Activated CD8-positive, alpha-beta T cell treated with anti-CD3 and anti-CD28 coated beads for 36 hours (primary cell): ENCODE measurements at regions of chr3 and their contacts with region 1.

Region 1: DNA sequence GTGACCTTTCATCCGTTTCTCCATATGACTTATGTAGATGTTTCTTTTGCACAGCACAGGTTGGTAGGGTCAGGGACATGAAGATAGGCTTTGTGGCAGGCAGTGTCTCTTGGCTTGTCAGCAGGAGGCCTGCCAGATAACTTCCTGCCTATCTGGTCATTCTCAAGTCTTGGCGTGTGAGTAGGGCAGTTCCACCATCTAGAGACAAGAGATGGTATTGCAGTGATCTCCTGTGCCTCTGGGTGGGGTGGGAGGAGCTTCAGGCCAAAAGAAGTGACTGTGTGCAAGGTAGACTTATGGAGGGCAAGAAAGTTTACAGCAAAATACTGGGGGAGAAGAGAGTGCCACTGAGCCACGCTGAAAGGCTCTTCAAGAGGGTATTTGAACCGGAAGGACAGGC is 11.0 kb downstream of the TEX264 start:
- DNase-seq: peak; percentile 87
- ATAC-seq: peak; percentile 90
- H3K4me3 Mint-ChIP-seq: no peak overlapping the region
- H3K27ac Mint-ChIP-seq: peak overlapping the region; percentile 68
- H3K4me1 Mint-ChIP-seq: peaks cover 89% of the 10 kb centered on the region
- H3K27me3 Mint-ChIP-seq: no peaks in the 10 kb centered on the region
- CTCF ChIP-seq: peak; percentile 92

Region 2: DNA sequence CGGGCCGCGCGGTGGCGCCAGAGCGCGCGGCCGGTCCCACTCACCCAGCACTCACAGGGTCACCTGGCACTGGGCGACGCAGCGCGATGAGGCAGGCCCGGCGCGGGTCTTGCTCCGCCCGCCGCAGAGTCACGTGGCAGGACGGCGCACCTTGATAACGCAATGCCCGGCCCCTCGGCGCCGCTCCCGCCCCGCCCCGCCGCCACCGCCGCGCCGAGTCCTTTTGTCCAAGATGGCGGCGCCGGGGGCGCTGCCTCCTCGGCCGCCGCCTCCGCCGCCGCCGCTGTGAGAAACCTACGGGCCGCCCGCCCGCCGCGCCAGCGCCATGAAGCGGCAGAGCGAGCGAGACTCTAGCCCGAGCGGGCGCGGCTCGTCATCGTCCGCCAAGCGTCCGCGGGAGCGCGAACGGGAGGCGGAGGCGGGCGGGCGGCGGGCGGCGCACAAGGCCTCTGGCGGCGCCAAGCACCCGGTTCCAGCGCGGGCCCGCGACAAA is 291.0 kb before region 1 on chr3 and contains the start of gene RBM15B:
- CTCF ChIA-PET with region 1: interaction called, 11 read pairs
- POLR2A ChIA-PET with region 1: interaction called, 3 read pairs
- intact Hi-C with region 1: loop called (anchors 10 kb)
- DNase-seq: peak; percentile 98
- ATAC-seq: peak; percentile 96
- H3K4me3 Mint-ChIP-seq: peak within 1 kb of the TSS; percentile 83
- H3K27ac Mint-ChIP-seq: peak within 1 kb of the TSS; percentile 91
- H3K4me1 Mint-ChIP-seq: peaks cover 68% of the 10 kb centered on the region
- H3K27me3 Mint-ChIP-seq: no peaks in the 10 kb centered on the region
- CTCF ChIP-seq: peak; percentile 78
- total RNA-seq, gene RBM15B: 20.8 to 20.9 TPM

Region 3: DNA sequence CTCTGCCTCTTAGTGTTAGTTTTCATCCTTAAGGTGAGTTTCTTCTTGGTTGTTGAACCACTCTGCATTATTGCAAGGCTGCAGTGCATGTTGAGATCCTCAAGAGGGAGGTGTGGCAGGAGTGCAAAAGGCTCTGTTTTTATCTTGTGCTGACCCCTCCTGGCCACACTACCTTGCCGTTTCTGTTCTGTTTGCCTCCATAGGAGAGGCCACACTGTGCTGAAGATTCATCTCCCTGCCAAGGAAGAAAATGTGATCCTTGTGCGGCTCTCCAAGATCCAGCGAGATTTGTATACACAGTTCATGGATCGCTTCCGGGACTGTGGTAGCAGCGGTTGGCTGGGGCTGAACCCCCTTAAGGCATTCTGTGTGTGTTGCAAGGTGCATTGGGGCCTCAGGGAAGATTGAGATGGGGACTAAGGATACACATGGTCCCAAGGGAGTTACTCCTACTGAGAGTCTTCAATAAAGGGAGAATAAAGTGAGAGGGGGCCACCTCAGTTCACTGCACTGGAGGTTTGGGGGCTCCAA is 44.1 kb before region 1 on chr3:
- CTCF ChIA-PET with region 1: interaction called, 54 read pairs
- POLR2A ChIA-PET with region 1: no interaction called
- intact Hi-C with region 1: no loop called
- DNase-seq: peak; percentile 66
- ATAC-seq: peak; percentile 89
- H3K4me3 Mint-ChIP-seq: no peak overlapping the region
- H3K27ac Mint-ChIP-seq: no peak overlapping the region
- H3K4me1 Mint-ChIP-seq: no peaks in the 10 kb centered on the region
- H3K27me3 Mint-ChIP-seq: no peaks in the 10 kb centered on the region
- CTCF ChIP-seq: peak; percentile 76

Region 4: DNA sequence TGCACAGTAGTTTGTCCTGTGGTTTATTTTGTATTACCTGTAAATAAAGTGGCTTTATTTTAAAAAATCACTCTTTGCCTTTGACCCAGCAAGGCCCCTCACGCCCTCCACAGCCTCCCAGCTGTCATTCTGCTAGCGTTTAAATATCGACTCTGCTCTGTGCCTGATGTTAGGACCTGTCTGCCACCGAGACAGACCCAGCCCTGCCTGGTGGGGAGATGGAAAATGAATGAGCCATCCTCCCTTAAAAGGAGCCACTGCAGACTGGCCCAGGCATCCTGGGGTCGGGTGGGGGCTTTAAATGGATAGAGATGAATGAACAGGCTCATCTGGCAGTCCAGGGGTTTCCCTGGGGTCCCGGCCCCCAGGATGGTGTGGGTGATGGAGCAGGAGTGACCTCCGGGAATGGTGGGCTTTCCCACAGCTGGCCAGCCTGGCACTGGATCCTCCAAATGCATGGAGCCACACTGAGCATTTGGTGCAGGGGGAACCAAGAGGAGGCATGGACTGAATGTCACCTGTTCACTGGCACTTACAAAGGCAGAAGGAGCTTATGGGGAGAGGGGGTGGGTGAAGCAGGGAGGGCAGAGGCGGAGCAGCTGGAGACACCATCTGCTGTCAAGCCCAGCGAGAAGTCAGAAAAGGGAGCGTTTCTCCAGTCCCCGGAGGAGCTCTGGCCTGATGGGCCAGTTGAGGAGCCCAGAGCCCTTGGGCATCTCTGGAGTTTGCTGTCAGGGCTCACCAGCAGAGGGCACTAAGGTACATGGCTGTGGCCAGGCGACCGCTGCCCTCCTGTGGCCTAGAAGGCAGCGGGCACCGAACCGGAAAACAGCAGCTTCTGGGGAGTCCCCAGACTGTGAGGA is 36.7 kb after region 1 on chr3:
- CTCF ChIA-PET with region 1: interaction called, 10 read pairs
- POLR2A ChIA-PET with region 1: no interaction called
- intact Hi-C with region 1: no loop called
- DNase-seq: peak; percentile 90
- ATAC-seq: peak; percentile 95
- H3K4me3 Mint-ChIP-seq: no peak overlapping the region
- H3K27ac Mint-ChIP-seq: no peak overlapping the region
- H3K4me1 Mint-ChIP-seq: peaks cover 35% of the 10 kb centered on the region
- H3K27me3 Mint-ChIP-seq: no peaks in the 10 kb centered on the region
- CTCF ChIP-seq: peak; percentile 87